Adrenal gland (tissue), 19 donors: ENCODE measurements at regions of chr9 and their contacts with region 1.

Region 1: DNA sequence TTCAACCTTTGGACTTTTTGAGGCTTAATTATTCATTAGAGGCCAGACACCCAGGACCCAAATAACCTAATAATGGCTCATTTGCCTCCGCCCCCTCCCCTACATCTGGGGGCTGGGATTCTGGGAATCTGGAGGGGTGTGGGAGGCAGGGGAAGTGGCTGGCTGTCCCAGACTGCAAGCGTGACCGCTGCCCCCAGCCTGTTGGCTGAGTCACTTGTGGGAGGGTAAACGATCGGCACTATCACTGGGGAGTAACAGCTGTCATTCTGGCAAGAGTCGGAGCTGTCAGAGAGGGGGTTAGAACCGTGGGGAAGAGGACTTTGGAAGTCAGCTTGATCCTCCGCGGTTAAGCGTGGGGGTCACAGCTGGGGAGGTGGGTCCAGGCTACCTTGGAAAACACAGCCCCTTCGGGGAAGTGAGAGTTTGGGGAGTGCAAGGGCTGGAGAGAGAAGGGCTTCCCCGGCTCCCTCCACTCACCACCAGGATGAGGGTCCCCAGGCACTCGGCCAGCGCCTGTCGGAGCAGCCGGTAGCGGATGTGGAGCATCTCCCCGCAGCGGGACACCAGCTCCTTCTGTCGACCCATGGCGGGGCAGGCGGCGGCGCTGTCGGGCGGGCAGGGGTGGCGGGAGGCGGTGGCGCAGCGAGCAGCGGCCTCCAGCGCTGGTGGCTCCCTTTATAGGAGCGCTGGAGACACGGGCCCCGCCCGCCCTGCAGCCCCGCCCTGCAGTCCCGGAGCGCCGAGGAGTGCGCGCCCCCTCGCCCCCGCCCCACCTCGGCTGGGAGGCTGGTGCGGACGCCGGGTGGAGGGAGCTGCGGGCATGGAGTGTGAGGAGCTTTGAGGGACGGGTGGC is at the start of gene AQP3:
- DNase-seq: peak; percentile 49 to 78 (median 66)
- H3K4me3 ChIP-seq: peak within 1 kb of the TSS in 1 of 4 donors; percentile 59
- H3K27ac ChIP-seq: no peak within 1 kb of the TSS
- H3K4me1 ChIP-seq: peaks cover 6 to 12% of the 10 kb centered on the region in 2 donors
- H3K27me3 ChIP-seq: no peaks in the 10 kb centered on the region
- CTCF ChIP-seq: peak in 4 of 6 experiments; percentile 23 to 40 (median 26)
- POLR2A ChIP-seq: no peak
- total RNA-seq, gene AQP3: 1.2 to 17.9 (median 2.7) TPM

Region 2: GRCh38 chr9:33320568-33321261 is 126.5 kb before region 1 on chr9:
- intact Hi-C with region 1: no loop called
- DNase-seq: peak in 5 of 7 donors; percentile 53 to 70 (median 60)
- H3K4me3 ChIP-seq: no peak overlapping the region
- H3K27ac ChIP-seq: peak overlapping the region in 4 of 5 donors; percentile 48 to 71 (median 52)
- H3K4me1 ChIP-seq: peaks cover 8 to 12% of the 10 kb centered on the region in 2 donors
- H3K27me3 ChIP-seq: no peaks in the 10 kb centered on the region
- CTCF ChIP-seq: no peak
- POLR2A ChIP-seq: no peak

Region 3: GRCh38 chr9:33404788-33405362 is 42.3 kb before region 1 on chr9:
- intact Hi-C with region 1: loop called in 1 of 2 experiments (anchors 5 kb)
- DNase-seq: no peak
- H3K4me3 ChIP-seq: no peak overlapping the region
- H3K27ac ChIP-seq: no peak overlapping the region
- H3K4me1 ChIP-seq: no peaks in the 10 kb centered on the region
- H3K27me3 ChIP-seq: no peaks in the 10 kb centered on the region
- CTCF ChIP-seq: no peak
- POLR2A ChIP-seq: no peak